PC-3 (cell line): ENCODE measurements at regions of chrX and their contacts with region 1.

Region 1: DNA sequence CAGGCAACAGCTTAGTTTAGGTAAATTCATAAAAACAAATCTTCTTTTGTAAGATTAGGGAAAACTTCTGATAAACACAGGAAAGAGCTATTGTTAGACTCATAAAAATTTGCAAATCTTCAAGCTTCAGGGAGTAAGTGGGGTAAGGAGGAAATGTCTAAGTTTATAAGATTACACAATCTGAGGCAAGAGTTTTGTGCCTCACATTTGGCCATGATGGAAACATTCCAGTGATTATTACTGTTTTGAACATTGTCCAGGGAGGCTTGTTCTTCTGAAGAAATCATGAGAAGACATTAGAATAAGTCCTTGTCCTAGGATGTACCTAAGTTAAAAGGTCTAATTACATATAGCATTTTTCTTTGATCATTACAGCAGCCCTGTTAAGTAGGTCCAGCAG is 72.8 kb downstream of the MAOB start:
- DNase-seq: peak; percentile 67
- ATAC-seq: peak; percentile 41
- H3K4me3 ChIP-seq: no peak overlapping the region
- H3K27ac ChIP-seq: peak overlapping the region; percentile 73
- H3K4me1 ChIP-seq: peaks cover 25% of the 10 kb centered on the region
- H3K27me3 ChIP-seq: no peaks in the 10 kb centered on the region
- CTCF ChIP-seq: no peak

Region 2: DNA sequence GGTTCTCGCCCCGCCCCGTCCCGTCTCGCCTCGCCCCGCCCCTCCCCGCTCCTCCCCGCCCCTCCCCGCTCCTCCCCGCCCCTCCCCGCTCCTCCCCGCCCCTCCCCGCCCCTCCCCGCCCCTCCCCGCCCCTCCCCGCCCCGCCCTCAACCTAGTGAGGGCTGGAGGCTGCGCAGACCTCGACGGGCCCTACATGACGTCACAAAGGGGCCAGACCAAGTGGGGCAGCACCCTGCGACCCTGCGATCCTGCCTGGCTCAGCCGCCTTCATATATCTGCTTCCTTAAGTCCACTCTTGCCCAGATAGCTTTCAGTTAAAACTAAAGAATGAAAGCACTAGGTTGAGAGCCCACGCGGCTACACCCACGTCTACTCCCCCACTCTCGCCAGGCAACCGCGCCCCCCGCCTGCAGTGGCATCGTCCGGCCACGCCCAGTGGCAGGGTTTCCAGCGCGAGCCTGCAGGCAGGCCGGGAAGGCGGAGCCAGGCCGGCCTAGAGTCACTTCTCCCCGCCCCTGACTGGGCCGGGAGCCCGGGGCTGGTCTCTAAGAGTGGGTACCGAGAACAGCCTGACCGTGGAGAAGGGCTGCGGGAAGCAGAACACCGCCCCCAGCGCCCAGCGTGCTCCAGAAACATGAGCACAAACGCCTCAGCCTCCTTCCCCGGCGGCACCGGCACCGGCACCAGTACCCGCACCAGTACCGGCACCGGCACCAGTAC is 154.9 kb before region 1 on chrX:
- CTCF ChIA-PET with region 1: no interaction called
- POLR2A ChIA-PET with region 1: no interaction called
- intact Hi-C with region 1: loop called (anchors 10 kb)
- DNase-seq: peak; percentile 93
- ATAC-seq: peak; percentile 96
- H3K4me3 ChIP-seq: peak overlapping the region; percentile 73
- H3K27ac ChIP-seq: peak overlapping the region; percentile 87
- H3K4me1 ChIP-seq: no peaks in the 10 kb centered on the region; the same call in 1 of the 2 replicates
- H3K27me3 ChIP-seq: no peaks in the 10 kb centered on the region
- CTCF ChIP-seq: peak; percentile 28; the same call in 1 of the 2 replicates

Region 3: GRCh38 chrX:43756076-43756475 is 53.4 kb before region 1 on chrX:
- CTCF ChIA-PET with region 1: no interaction called
- POLR2A ChIA-PET with region 1: no interaction called
- intact Hi-C with region 1: loop called (anchors 5 kb)
- DNase-seq: no peak
- ATAC-seq: no peak
- H3K4me3 ChIP-seq: no peak overlapping the region
- H3K27ac ChIP-seq: no peak overlapping the region
- H3K4me1 ChIP-seq: no peaks in the 10 kb centered on the region
- H3K27me3 ChIP-seq: no peaks in the 10 kb centered on the region
- CTCF ChIP-seq: no peak